BJ (cell line): ENCODE measurements at regions of chr7 and their contacts with region 1.

Region 1: GRCh38 chr7:134514663-134515062 is 12.7 kb upstream of the AKR1B10 start:
- DNase-seq: no peak
- H3K4me3 ChIP-seq: no peak overlapping the region
- H3K27me3 ChIP-seq: no peaks in the 10 kb centered on the region
- CTCF ChIP-seq: peak; percentile 80

Region 2: GRCh38 chr7:134438946-134439345 is 75.7 kb before region 1 on chr7:
- CTCF ChIA-PET with region 1: interaction called, 323 read pairs
- POLR2A ChIA-PET with region 1: no interaction called
- DNase-seq: no peak
- H3K4me3 ChIP-seq: no peak overlapping the region
- H3K27me3 ChIP-seq: no peaks in the 10 kb centered on the region
- CTCF ChIP-seq: no peak

Region 3: DNA sequence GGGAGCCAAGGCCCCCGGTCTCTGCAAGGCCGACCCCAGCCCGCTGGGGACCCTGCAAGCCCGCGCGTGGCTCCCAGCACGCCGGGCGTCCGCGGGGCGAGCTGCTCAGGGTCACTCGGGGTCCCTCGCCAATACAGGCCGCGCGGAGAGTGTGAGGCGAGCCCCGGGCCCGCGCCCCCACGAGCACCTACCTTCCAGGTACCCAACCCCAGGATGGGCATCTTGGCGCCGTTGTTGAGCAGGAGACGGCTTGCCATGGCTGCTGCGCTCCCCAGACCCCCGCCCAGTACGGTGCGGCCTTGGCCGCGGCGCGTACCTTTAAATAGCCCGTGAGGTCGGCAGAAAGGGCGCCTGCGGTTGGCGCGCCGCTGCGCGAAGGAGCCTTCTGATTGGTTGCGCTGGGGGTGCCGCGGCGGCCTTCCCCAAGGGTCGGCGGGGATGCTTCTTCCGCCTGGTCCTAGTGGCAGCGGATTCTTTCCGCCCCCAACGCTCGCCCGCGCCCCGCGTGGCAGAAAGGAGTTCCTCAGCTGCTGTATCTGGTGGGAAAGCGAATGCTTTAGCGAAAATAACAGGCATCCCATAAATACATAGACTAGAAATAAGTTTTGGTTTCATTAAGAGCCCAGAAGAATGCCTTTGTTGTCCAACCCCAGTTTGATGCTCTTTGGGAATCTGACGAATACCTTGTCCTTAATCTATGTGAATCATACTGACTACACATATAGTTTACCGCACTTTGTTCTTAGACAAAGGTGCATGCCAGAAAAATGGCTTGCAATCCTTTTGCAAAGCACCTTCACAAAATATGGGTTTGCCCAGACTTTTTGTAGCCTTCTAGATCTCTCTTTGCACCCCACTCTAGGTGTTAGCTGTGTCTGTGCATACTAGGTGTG is 55.6 kb before region 1 on chr7 and contains the start of gene AKR1B1:
- CTCF ChIA-PET with region 1: interaction called, 16 read pairs
- POLR2A ChIA-PET with region 1: no interaction called
- DNase-seq: peak; percentile 59
- H3K4me3 ChIP-seq: peak within 1 kb of the TSS; percentile 82
- H3K27me3 ChIP-seq: no peaks in the 10 kb centered on the region
- CTCF ChIP-seq: peak; percentile 80
- polyA plus RNA-seq, gene AKR1B1: 257 and 331 TPM in 2 replicates

Region 4: GRCh38 chr7:134527979-134528371 is 13.3 kb after region 1 on chr7:
- CTCF ChIA-PET with region 1: interaction called, 20 read pairs
- POLR2A ChIA-PET with region 1: no interaction called
- DNase-seq: peak; percentile 13
- H3K4me3 ChIP-seq: no peak overlapping the region
- H3K27me3 ChIP-seq: peaks cover 1% of the 10 kb centered on the region
- CTCF ChIP-seq: no peak

Region 5: DNA sequence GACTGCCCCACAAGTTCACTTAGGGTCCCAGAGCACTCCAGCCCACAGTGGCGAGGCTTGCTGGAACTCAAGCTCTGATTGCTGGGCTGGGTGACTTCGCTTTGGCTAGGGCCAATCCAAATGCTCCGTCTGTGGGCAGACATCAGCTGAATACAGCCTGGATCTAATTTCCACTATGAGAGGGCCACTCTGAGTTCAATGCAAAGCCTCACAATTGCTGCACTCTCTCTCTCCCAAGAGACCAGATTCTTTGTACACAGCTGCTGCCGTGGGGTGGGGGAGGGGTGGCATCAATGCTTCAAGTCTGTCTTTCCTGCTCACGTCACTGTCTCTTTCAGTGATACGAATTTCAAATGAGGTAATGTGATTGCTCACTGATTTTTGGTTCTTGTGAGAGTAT is 84.7 kb after region 1 on chr7:
- CTCF ChIA-PET with region 1: interaction called, 248 read pairs
- POLR2A ChIA-PET with region 1: no interaction called
- DNase-seq: no peak
- H3K4me3 ChIP-seq: no peak overlapping the region
- H3K27me3 ChIP-seq: no peaks in the 10 kb centered on the region
- CTCF ChIP-seq: no peak

Region 6: GRCh38 chr7:134690016-134690415 is 175.4 kb after region 1 on chr7:
- CTCF ChIA-PET with region 1: no interaction called
- POLR2A ChIA-PET with region 1: no interaction called
- DNase-seq: no peak
- H3K4me3 ChIP-seq: no peak overlapping the region
- H3K27me3 ChIP-seq: no peaks in the 10 kb centered on the region
- CTCF ChIP-seq: peak; percentile 66

Region 7: GRCh38 chr7:134737566-134738345 is 223.1 kb after region 1 on chr7:
- CTCF ChIA-PET with region 1: no interaction called
- POLR2A ChIA-PET with region 1: interaction called, 13 read pairs
- DNase-seq: peak; percentile 90
- H3K4me3 ChIP-seq: no peak overlapping the region
- H3K27me3 ChIP-seq: no peaks in the 10 kb centered on the region
- CTCF ChIP-seq: no peak